ENCODE measurements at regions of chr20 and their contacts with region 1.

Region 1: GRCh38 chr20:12970372-12970821 is 38.4 kb upstream of the SPTLC3 start:
- DNase-seq: no peak
- ATAC-seq: peak; percentile 47 to 58

Region 2: GRCh38 chr20:12570371-12570770 is 400.0 kb before region 1 on chr20:
- intact Hi-C with region 1: no loop called
- DNase-seq: no peak
- ATAC-seq: no peak

Region 3: GRCh38 chr20:12902992-12903391 is 67.4 kb before region 1 on chr20:
- intact Hi-C with region 1: no loop called
- DNase-seq: no peak
- ATAC-seq: peak; percentile 45 to 80

Region 4: DNA sequence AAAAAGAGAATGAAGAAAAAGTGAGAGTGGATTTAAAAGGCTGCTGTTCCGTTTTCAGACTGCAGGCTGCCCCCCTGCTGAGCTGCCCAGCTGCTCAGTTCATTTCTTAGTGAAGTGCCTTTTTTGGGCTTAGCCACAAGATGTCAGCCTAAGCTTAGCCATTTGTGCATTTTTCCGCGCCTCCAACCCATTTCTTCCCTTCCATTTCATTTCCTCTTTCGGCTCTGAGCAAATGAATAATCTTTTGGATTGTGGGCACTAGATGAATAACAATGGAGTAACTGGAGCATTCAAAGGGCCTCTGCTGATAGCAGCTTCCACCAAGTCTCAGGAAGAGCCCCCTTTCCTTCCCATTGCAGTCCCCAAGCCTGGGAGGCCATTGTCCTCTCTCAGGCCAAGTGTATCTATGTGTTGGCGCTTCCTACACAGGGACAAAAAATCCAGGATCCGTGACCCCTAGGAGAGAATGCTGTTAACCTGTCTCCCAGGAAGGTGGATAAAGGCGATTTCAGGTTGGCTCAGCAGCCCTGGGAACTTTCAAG is 45.1 kb before region 1 on chr20:
- intact Hi-C with region 1: loop called in 1 of 2 experiments (anchors 2 kb)
- DNase-seq: peak; percentile 39
- ATAC-seq: peak; percentile 91

Region 5: DNA sequence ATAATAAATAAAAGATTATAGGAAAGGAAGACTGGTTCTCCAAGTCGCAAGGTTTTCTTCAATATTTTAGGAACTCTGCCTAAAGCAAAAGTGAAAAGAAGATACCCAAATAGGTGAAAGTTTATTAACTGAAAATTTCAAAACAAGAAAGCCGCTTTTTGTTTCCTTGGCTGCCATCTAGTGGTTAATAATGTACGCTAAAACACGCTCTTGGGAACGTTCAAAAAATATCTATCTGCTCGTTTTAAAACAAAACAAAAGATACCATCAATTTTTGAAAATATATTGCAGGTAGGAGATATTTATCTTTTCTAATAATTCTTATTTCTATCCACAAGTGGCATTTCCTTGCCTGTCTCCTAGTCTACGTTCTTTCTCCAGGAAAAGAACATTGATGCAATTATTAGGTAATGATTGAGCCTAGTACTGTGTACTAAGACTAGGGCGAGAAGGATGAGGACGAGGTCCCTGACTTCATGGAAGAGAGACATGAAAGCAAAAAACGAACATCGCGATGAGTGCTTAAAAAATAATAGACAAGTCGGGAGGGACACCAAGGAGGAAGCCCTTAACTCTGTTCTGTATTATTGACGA is 135.6 kb after region 1 on chr20:
- intact Hi-C with region 1: loop called (anchors 2 to 5 kb)
- DNase-seq: no peak
- ATAC-seq: peak in 1 of 2 donors; percentile 34

Measured in left cardiac atrium (tissue), 4 donors.